MCF 10A (cell line): ENCODE measurements at regions of chr10 and their contacts with region 1.

Region 1: DNA sequence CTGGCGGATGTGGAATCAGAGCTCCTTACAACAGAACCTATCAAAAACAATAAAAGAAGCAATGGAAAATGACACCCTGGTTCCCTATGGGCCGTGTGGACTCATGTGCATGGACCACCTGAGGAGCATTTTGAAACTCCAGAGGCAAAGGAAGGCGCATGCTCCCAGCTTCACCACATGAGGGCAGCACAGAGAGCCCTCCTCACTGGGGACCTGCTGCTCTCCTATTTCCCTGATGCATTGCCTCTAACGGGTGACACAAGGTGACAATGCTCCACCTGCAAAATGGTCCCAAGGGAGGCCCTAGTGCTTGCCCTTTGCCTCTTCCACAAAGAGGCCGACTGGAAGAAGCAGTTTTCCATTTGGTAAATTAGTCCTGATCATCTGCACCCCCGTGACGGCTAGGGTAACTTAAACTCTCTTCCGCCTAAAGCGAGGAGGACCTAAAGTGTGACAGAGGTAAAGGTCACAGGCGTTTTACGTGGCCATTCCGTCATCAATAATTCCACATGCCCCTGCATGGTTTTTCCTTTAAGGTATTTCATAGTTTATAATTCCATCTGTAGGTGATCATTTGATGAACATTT is 67.7 kb downstream of the GPAM start:
- DNase-seq: peak; percentile 58
- H3K4me3 Mint-ChIP-seq: no peak overlapping the region
- H3K27ac Mint-ChIP-seq: no peak overlapping the region
- H3K4me1 Mint-ChIP-seq: no peaks in the 10 kb centered on the region
- H3K27me3 Mint-ChIP-seq: no peaks in the 10 kb centered on the region
- CTCF ChIP-seq: peak; percentile 67

Region 2: DNA sequence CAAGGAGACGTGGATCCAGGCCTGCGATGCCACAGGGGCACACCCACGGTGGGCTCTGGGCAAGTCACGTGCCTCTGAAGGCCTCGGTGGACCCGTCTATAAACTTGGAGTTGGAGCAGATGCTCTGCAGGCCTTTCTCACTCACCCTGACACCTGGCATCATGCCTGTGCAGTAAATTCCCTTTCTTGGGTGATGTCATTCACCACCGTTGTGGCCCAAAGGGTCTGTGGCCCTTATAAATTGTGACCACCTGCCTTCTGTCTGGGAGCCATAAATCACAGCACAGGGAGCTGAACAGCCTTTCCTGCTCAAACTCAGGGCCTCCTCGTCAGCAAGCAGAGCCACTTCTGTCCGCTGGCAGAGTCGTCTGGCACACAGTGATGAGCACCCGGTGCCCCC is 15.5 kb after region 1 on chr10:
- CTCF ChIA-PET with region 1: interaction called, 25 read pairs
- POLR2A ChIA-PET with region 1: no interaction called
- intact Hi-C with region 1: no loop called
- DNase-seq: no peak
- H3K4me3 Mint-ChIP-seq: no peak overlapping the region
- H3K27ac Mint-ChIP-seq: no peak overlapping the region
- H3K4me1 Mint-ChIP-seq: no peaks in the 10 kb centered on the region
- H3K27me3 Mint-ChIP-seq: no peaks in the 10 kb centered on the region
- CTCF ChIP-seq: no peak

Region 3: DNA sequence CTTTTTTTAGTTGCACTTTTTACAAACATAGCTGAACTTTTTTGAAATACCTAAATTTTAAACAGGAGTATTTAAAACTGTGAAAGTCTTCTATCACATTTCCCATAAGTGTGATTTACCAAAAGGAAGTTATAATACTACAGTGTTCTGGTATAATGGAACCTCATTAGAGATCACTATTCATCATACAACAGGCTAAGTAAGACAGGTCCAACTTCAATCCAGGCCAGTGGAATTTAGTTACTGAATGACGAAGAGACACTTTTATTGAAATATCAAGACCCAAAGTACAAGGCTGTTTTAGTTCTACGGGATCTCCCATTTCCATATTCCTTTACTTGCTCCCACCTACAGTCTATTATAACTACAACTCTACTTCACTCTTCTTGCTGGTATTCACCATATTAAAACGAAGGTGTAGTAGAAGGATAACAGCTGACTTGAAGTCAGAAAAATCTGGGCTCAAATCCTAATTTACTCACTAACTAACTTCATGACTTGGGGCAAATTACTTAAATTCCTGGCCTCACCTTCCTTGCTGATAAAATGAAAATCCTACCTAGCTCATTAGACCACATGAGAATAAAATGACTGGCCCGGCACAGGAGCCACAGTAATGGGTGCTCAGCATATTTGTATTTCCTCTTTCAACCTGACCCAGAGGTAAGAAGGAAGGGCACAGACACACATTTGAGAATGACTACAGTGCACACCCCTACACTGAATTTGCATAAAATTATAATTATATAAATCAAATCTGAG is 46.0 kb after region 1 on chr10:
- CTCF ChIA-PET with region 1: no interaction called
- POLR2A ChIA-PET with region 1: no interaction called
- intact Hi-C with region 1: no loop called
- DNase-seq: no peak
- H3K4me3 Mint-ChIP-seq: no peak overlapping the region
- H3K27ac Mint-ChIP-seq: no peak overlapping the region
- H3K4me1 Mint-ChIP-seq: no peaks in the 10 kb centered on the region
- H3K27me3 Mint-ChIP-seq: no peaks in the 10 kb centered on the region
- CTCF ChIP-seq: no peak